Activated CD8-positive, alpha-beta T cell treated with anti-CD3 and anti-CD28 coated beads for 36 hours (primary cell): ENCODE measurements at regions of chr1 and their contacts with region 1.

Region 1: GRCh38 chr1:111507411-111508201 is 4.2 kb upstream of the ADORA3 start:
- DNase-seq: peak; percentile 83
- ATAC-seq: peak; percentile 76
- H3K4me3 Mint-ChIP-seq: peak overlapping the region; percentile 49
- H3K27ac Mint-ChIP-seq: peak overlapping the region; percentile 94
- H3K4me1 Mint-ChIP-seq: peaks cover 59% of the 10 kb centered on the region
- H3K27me3 Mint-ChIP-seq: no peaks in the 10 kb centered on the region
- CTCF ChIP-seq: no peak

Region 2: GRCh38 chr1:111354584-111354983 is 153.0 kb before region 1 on chr1:
- CTCF ChIA-PET with region 1: no interaction called
- POLR2A ChIA-PET with region 1: no interaction called
- intact Hi-C with region 1: no loop called
- DNase-seq: no peak
- ATAC-seq: no peak
- H3K4me3 Mint-ChIP-seq: no peak overlapping the region
- H3K27ac Mint-ChIP-seq: no peak overlapping the region
- H3K4me1 Mint-ChIP-seq: peaks cover 5% of the 10 kb centered on the region
- H3K27me3 Mint-ChIP-seq: no peaks in the 10 kb centered on the region
- CTCF ChIP-seq: no peak

Region 3: DNA sequence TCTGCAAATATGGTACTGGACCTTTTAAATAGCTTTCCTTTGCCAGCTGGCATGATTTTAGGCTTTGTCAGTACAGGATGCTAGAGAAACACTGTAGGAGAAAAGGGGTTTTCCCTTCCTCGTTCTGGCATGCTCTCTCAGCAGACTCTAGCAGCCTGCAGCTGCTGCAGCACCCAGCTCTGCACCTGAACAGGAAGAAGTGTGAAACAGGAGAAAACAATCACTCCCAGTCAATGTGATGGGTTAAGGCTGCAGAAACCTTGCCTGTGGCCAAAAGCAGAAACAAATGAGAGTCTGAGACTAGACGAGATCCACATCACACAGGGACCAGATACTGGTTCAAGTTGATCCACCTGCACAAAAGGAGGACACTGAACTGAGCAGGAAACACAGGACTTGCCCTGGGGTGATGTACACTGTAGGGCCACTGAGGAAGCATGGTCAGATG is 101.3 kb before region 1 on chr1:
- CTCF ChIA-PET with region 1: no interaction called
- POLR2A ChIA-PET with region 1: no interaction called
- intact Hi-C with region 1: no loop called
- DNase-seq: peak; percentile 51
- ATAC-seq: peak; percentile 93
- H3K4me3 Mint-ChIP-seq: peak overlapping the region; percentile 30
- H3K27ac Mint-ChIP-seq: peak overlapping the region; percentile 48
- H3K4me1 Mint-ChIP-seq: peaks cover 33% of the 10 kb centered on the region
- H3K27me3 Mint-ChIP-seq: no peaks in the 10 kb centered on the region
- CTCF ChIP-seq: no peak

Region 4: DNA sequence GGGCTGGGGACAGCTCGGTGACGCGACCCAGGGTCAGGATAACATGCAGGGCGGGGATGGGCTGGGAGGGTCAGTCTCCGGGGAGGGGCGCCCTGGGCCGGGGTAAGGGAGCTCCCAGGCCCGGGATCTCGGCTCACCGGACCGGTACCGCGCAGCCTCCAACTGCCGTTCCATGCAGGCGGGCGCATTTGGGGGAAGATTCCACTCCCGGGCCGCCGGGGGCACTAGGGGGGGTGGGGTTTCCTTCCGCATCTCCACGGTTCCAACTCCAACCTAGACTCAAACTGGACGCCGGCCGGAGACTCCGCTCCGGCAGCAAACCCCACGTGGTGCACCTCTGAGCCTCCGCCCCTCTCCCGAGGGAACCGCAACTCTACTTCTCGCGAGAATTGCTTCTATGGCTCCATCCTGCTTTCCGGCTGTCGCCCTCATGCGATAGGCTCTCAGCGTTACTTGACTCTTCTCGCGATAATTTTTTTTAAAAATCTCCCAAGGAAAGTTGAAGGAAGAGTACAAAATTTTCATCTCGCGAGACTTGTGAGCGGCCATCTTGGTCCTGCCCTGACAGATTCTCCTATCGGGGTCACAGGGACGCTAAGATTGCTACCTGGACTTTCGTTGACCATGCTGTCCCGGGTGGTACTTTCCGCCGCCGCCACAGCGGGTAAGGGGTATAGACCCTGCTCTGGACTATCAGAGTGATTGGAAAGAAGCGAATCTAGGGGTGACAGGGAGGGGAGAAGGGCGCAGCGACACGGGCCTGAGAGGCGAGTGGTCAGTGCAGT is 58.5 kb before region 1 on chr1 and contains the starts of genes ATP5PB and WDR77:
- CTCF ChIA-PET with region 1: interaction called, 5 read pairs
- POLR2A ChIA-PET with region 1: interaction called, 17 read pairs
- intact Hi-C with region 1: no loop called
- DNase-seq: peak; percentile 95
- ATAC-seq: peak; percentile 96
- H3K4me3 Mint-ChIP-seq: peak within 1 kb of the TSS; percentile 100
- H3K27ac Mint-ChIP-seq: peak within 1 kb of the TSS; percentile 100
- H3K4me1 Mint-ChIP-seq: peaks cover 73% of the 10 kb centered on the region
- H3K27me3 Mint-ChIP-seq: no peaks in the 10 kb centered on the region
- CTCF ChIP-seq: no peak
- total RNA-seq, gene ATP5PB: 341 to 342 TPM
- total RNA-seq, gene WDR77: 54.0 to 54.6 TPM

Region 5: GRCh38 chr1:111497592-111497991 is 10.0 kb before region 1 on chr1:
- CTCF ChIA-PET with region 1: interaction called, 52 read pairs
- POLR2A ChIA-PET with region 1: interaction called, 23 read pairs
- intact Hi-C with region 1: no loop called
- DNase-seq: no peak
- ATAC-seq: no peak
- H3K4me3 Mint-ChIP-seq: no peak overlapping the region
- H3K27ac Mint-ChIP-seq: no peak overlapping the region
- H3K4me1 Mint-ChIP-seq: peaks cover 25% of the 10 kb centered on the region
- H3K27me3 Mint-ChIP-seq: no peaks in the 10 kb centered on the region
- CTCF ChIP-seq: no peak

Region 6: GRCh38 chr1:111603979-111604378 is 96.4 kb after region 1 on chr1:
- CTCF ChIA-PET with region 1: interaction called, 53 read pairs
- POLR2A ChIA-PET with region 1: interaction called, 11 read pairs
- intact Hi-C with region 1: no loop called
- DNase-seq: peak; percentile 93
- ATAC-seq: peak; percentile 85
- H3K4me3 Mint-ChIP-seq: peak overlapping the region; percentile 36
- H3K27ac Mint-ChIP-seq: peak overlapping the region; percentile 90
- H3K4me1 Mint-ChIP-seq: peaks cover 73% of the 10 kb centered on the region
- H3K27me3 Mint-ChIP-seq: no peaks in the 10 kb centered on the region
- CTCF ChIP-seq: no peak

Region 7: DNA sequence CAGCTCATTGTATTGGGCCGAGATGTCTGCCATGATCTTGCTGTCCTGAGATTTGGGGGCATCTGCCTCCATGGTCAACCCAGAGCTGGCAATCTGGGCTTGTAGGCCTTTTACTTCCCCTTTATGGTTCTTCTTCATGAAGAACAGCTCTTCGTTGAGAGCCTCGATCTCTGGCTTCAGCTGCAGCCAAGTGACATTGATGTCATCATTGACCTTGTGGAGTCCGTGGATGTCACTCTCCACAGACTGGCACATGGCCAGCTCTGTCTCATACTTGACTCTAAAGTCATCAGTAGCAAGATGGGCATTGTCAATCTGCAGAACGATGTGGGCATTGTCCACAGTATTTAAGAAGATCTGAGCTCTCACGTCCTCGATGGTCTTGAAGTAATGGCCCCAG is 141.2 kb after region 1 on chr1:
- CTCF ChIA-PET with region 1: interaction called, 28 read pairs
- POLR2A ChIA-PET with region 1: interaction called, 5 read pairs
- intact Hi-C with region 1: no loop called
- DNase-seq: peak; percentile 41
- ATAC-seq: no peak
- H3K4me3 Mint-ChIP-seq: no peak overlapping the region
- H3K27ac Mint-ChIP-seq: peak overlapping the region; percentile 77
- H3K4me1 Mint-ChIP-seq: peaks cover 79% of the 10 kb centered on the region
- H3K27me3 Mint-ChIP-seq: no peaks in the 10 kb centered on the region
- CTCF ChIP-seq: no peak

Region 8: GRCh38 chr1:111679541-111679940 is 171.9 kb after region 1 on chr1:
- CTCF ChIA-PET with region 1: interaction called, 11 read pairs
- POLR2A ChIA-PET with region 1: interaction called, 4 read pairs
- intact Hi-C with region 1: no loop called
- DNase-seq: no peak
- ATAC-seq: no peak
- H3K4me3 Mint-ChIP-seq: no peak overlapping the region
- H3K27ac Mint-ChIP-seq: no peak overlapping the region
- H3K4me1 Mint-ChIP-seq: peaks cover 46% of the 10 kb centered on the region
- H3K27me3 Mint-ChIP-seq: no peaks in the 10 kb centered on the region
- CTCF ChIP-seq: no peak

Region 9: DNA sequence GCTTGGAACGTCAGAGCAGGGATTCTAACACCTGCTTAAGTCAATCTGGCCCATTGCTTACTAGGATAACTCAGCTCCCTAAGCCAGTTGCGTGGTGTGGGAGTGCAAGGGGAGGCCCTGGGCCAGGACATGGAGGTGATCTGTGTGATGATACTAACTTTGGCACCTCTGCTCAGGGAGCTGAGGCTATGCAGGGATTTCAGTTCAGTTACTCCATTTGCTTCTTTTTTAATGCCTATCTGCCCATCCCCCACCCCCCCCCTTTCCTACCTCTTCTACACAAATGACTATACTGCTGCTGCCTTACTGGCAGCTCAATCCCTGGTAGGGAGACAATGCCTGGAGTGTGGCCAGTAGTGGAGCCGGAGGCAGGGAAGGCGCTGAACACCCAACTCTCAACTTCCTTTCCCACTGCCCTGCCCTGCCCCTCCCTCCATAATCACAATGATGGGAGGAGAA is 212.1 kb after region 1 on chr1:
- CTCF ChIA-PET with region 1: interaction called, 47 read pairs
- POLR2A ChIA-PET with region 1: interaction called, 3 read pairs
- intact Hi-C with region 1: no loop called
- DNase-seq: no peak
- ATAC-seq: no peak
- H3K4me3 Mint-ChIP-seq: no peak overlapping the region
- H3K27ac Mint-ChIP-seq: no peak overlapping the region
- H3K4me1 Mint-ChIP-seq: peaks cover 20% of the 10 kb centered on the region
- H3K27me3 Mint-ChIP-seq: no peaks in the 10 kb centered on the region
- CTCF ChIP-seq: no peak